ENCODE measurements at regions of chr19 and their contacts with region 1.

Region 1: DNA sequence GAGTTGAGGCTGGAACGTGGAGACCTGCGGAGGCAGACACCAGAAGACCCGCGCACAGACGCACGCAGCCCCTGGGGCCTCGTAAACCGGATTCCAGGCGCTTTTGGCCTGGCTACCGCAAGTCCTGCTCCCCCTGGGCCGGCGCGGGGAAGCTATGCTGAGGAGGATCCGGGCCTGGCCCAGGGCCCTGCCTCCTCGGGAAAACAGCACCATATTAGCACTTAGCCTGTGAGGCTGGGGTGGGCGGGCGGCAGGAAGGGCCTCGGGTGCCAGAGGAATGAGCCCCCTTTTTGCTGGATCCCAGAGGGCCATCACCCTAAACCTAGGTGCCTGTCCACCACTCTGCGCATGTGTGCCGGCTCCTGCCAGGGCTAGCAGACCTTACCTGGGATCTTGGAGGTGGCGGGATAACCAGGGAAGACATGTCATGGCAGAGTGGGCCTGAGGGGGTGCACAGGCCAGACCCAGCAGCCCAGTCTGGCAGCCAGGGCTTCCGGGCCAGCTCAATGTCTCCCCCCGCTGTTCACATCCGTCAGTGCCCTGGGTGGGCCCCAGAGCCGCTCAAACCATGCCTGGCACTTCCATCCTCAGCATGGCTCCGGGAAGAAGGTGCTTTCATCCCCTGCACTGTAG is 7.3 kb downstream of the ELOF1 start:
- DNase-seq: no peak
- ATAC-seq: peak; percentile 52
- H3K4me3 Mint-ChIP-seq: no peak overlapping the region
- H3K27ac Mint-ChIP-seq: no peak overlapping the region
- H3K4me1 Mint-ChIP-seq: peaks cover 21% of the 10 kb centered on the region
- H3K27me3 Mint-ChIP-seq: no peaks in the 10 kb centered on the region

Region 2: DNA sequence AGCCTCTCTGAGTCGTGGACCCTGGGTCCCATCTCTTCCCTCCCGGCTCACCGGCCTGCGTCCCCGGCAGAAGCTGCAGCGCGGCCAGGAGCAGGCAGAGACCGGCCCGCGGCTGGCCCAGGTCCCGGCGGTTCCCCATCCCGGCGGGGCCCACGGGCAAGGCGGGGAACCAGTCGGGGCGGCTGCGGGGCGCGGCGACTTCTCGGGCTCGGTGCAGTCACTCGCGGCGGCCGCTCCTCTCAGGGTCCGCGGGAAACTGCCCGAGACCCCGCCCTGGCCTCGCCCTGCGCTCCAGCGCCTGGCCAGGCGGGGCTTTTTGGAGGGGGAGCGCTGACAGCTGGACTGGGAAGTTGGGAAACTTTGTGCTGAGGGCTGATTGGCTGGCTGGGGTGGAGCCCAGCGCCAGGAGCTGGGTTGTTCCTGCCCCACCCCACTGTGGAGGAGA is 1541.5 kb before region 1 on chr19 and contains the start of gene COL5A3:
- CTCF ChIA-PET with region 1: no interaction called
- POLR2A ChIA-PET with region 1: no interaction called
- DNase-seq: no peak
- ATAC-seq: no peak
- H3K4me3 Mint-ChIP-seq: no peak within 1 kb of the TSS
- H3K27ac Mint-ChIP-seq: no peak within 1 kb of the TSS
- H3K4me1 Mint-ChIP-seq: peaks cover 14% of the 10 kb centered on the region
- H3K27me3 Mint-ChIP-seq: peaks cover 34% of the 10 kb centered on the region
- total RNA-seq, gene COL5A3: 0.13 to 0.18 TPM

Region 3: DNA sequence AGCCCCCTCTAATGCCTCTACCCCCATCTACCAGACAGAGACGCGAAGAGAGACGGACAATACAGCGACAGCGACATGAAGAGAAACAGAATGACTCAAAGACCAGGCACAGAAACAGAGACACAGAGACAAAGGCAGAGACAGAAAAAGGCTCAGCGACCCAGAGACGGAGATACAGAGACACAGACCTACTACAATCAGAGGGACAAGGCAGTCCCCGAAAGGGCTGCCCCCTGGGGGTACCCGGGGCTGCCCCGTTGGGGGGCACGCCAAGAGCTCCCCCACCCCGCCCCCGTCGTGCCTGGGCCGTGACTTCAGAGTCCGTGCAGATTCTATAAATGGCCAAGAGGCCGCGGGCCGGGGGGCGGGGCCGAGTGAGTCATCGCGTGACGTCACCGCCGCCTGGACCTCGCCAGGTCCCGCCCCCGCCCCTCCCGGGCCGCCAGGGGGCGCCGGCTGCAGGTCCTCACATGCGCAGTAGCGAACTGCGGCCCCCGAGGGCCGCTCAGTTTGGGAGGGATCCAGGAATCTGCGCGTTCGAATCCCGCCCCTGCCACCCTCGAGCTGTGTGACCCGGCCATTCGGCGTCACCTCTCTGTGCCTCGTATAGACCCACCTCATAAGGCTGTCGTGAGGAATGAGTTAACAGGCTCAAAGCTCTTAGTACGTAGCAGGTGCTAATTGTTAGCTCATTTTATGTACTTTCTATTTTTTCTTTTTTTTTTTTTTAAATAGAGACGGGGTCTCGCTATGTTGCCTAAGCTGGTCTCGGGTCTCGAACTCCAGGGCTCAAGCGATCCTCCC is 15.7 kb before region 1 on chr19:
- CTCF ChIA-PET with region 1: interaction called, 23 read pairs
- POLR2A ChIA-PET with region 1: no interaction called
- DNase-seq: peak; percentile 86
- ATAC-seq: peak; percentile 87
- H3K4me3 Mint-ChIP-seq: peak overlapping the region; percentile 10
- H3K27ac Mint-ChIP-seq: no peak overlapping the region
- H3K4me1 Mint-ChIP-seq: peaks cover 12% of the 10 kb centered on the region
- H3K27me3 Mint-ChIP-seq: peaks cover 16% of the 10 kb centered on the region

Measured in activated CD8-positive, alpha-beta T cell treated with anti-CD3 and anti-CD28 coated beads, Interleukin-2, amount 10 ng/mL, durations not matched to agents 7 days and 5 days (primary cell).